Esophagus squamous epithelium (tissue), 5 donors: ENCODE measurements at regions of chrX and their contacts with region 1.

Region 1: GRCh38 chrX:129925305-129926092 is 19.5 kb downstream of the UTP14A start:
- DNase-seq: no peak
- H3K4me3 ChIP-seq: no peak overlapping the region
- H3K27ac ChIP-seq: peak overlapping the region in 2 of 4 donors; percentile 25 to 37
- H3K4me1 ChIP-seq: peaks cover 0 to 6% (median 0%) of the 10 kb centered on the region in 3 donors
- H3K27me3 ChIP-seq: no peaks in the 10 kb centered on the region
- CTCF ChIP-seq: peak; percentile 25 to 69 (median 64)
- POLR2A ChIP-seq: no peak

Region 2: DNA sequence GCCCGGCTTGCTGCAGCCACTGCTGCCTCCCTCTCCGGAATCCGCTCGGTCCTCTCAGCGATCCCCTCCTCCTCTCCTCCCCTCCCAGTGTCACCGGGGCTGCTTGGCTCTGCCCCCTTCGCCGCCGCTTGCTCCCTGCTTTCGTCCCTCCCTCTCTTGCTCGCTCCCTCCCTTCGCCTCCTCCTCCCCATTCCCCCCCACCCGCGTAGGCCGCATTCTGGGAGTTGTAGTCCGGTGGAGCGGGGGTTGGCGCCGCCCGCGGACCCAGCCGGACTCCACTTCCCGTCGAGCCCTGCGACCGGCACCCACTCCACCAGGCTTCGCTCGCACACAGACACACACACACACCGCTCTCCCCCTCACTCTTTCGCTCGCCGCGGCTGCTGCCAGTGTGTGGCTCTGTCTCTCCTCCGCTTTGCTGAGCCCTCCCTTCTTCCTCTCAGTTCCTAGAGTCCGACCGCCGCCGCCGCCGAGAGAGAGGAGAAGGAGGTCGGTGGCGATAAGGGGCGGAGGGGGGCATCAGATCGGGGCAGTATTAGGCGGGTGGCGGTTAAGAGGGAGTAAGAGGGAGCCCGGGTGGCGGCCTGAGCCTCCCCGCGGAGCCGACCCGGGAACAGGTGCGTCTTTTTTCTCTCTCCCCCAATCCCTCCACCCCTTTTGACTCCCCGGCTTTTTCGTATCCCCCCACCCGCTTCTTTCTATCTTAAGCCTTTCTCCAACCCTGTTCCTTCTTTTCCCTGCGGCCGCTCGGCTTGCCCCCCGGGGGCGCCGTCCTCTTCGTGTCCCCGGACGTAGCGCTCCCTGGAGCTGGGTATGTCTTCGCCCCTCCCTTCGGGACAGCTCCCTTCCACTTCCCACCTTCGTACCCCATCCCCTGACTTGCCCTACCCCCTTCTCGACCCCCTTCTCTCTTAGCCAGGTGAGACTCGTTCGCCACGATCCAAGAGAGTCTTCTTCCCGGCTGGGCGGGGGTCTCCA is 57.1 kb after region 1 on chrX and contains the start of gene BCORL1:
- intact Hi-C with region 1: no loop called
- DNase-seq: peak; percentile 44
- H3K4me3 ChIP-seq: no peak within 1 kb of the TSS
- H3K27ac ChIP-seq: peak within 1 kb of the TSS in 3 of 4 donors; percentile 62 to 81 (median 80)
- H3K4me1 ChIP-seq: peaks cover 0 to 38% (median 0%) of the 10 kb centered on the region in 3 donors
- H3K27me3 ChIP-seq: no peaks in the 10 kb centered on the region
- CTCF ChIP-seq: no peak
- POLR2A ChIP-seq: peak in 2 of 4 donors; percentile 70 to 78
- total RNA-seq, gene BCORL1: 1.7 to 4.0 (median 2.7) TPM

Region 3: DNA sequence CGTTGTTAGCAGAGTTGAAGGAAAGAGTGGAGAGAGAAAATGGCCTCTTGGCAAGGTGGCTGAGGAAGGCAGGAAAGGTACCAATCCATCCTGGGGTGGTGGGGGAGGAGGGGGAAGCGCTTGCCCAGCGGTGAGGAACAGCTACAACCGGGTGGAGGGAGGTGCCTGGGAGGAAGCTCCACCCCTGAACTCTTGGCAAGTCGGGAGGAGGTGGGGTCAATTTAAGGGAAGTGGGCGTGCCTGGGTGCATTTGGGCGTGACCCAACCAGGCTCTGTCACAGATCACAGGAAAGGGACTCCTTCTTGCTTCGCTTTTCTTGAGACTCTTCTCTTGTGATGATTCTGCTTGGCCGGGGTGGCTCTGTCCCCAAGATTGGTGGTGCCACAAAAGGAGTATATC is 98.6 kb after region 1 on chrX:
- intact Hi-C with region 1: loop called (anchors 10 kb)
- DNase-seq: peak; percentile 27
- H3K4me3 ChIP-seq: no peak overlapping the region
- H3K27ac ChIP-seq: peak overlapping the region in 1 of 4 donors; percentile 29
- H3K4me1 ChIP-seq: peaks cover 0 to 12% (median 0%) of the 10 kb centered on the region in 3 donors
- H3K27me3 ChIP-seq: no peaks in the 10 kb centered on the region
- CTCF ChIP-seq: no peak
- POLR2A ChIP-seq: no peak

Region 4: DNA sequence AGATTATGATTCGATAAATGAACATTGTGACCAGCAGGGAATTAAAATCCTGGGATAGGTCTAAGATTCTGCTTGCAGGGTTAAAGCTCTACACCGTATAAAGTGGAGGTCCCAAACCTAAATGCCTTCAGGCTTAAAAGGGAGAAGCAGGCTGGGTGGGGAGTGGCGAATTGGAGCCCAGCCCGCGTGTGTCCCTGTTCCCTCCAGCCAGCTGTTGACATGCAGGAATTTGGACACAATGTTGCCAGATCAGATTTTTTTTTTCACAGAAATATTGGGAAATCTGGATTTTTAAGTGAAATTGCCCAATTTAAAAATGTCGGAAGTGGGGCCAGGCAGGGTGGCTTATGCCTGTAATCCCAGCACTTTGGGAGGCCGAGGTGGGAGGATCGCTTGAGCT is 124.3 kb after region 1 on chrX:
- intact Hi-C with region 1: no loop called
- DNase-seq: no peak
- H3K4me3 ChIP-seq: no peak overlapping the region
- H3K27ac ChIP-seq: no peak overlapping the region
- H3K4me1 ChIP-seq: no peaks in the 10 kb centered on the region
- H3K27me3 ChIP-seq: no peaks in the 10 kb centered on the region
- CTCF ChIP-seq: no peak
- POLR2A ChIP-seq: no peak

Region 5: GRCh38 chrX:130060122-130061069 is 134.9 kb after region 1 on chrX:
- intact Hi-C with region 1: loop called (anchors 10 kb)
- DNase-seq: peak; percentile 3
- H3K4me3 ChIP-seq: peak overlapping the region; percentile 43 to 72 (median 55)
- H3K27ac ChIP-seq: peak overlapping the region; percentile 70 to 77 (median 76)
- H3K4me1 ChIP-seq: peaks cover 3 to 12% (median 5%) of the 10 kb centered on the region in 3 donors
- H3K27me3 ChIP-seq: no peaks in the 10 kb centered on the region
- CTCF ChIP-seq: peak; percentile 75 to 93 (median 91)
- POLR2A ChIP-seq: peak in 1 of 4 donors; percentile 4